CD14-positive monocyte (primary cell): ENCODE measurements at regions of chr1 and their contacts with region 1.

Region 1: GRCh38 chr1:21344750-21345443 is 54.6 kb upstream of the ECE1 start:
- DNase-seq: no peak
- H3K4me3 ChIP-seq: peak overlapping the region; percentile 14 to 75 (median 48)
- H3K4me3 Mint-ChIP-seq: peak overlapping the region; percentile 92 to 94
- H3K27ac ChIP-seq: no peak overlapping the region
- H3K27ac Mint-ChIP-seq: peak overlapping the region in 5 of 7 donors; percentile 45 to 87 (median 50)
- H3K4me1 ChIP-seq: peaks cover 31 to 39% of the 10 kb centered on the region in 2 donors
- H3K4me1 Mint-ChIP-seq: peaks cover 41% of the 10 kb centered on the region
- H3K27me3 ChIP-seq: peaks cover 49 to 89% of the 10 kb centered on the region in 2 donors
- H3K27me3 Mint-ChIP-seq: peaks cover 45 to 65% (median 58%) of the 10 kb centered on the region in 3 donors
- CTCF ChIP-seq: no peak

Region 2: GRCh38 chr1:21255278-21255942 is 89.5 kb before region 1 on chr1:
- intact Hi-C with region 1: loop called in 1 of 2 experiments (anchors 5 kb)
- DNase-seq: peak; percentile 83 to 89 (median 84)
- H3K4me3 ChIP-seq: no peak overlapping the region
- H3K4me3 Mint-ChIP-seq: peak overlapping the region in 1 of 2 donors; percentile 48
- H3K27ac ChIP-seq: no peak overlapping the region
- H3K27ac Mint-ChIP-seq: peak overlapping the region; percentile 36 to 80 (median 66)
- H3K4me1 ChIP-seq: peaks cover 0 to under 1% of the 10 kb centered on the region in 2 donors
- H3K4me1 Mint-ChIP-seq: peaks cover 10% of the 10 kb centered on the region
- H3K27me3 ChIP-seq: peaks cover 0 to 18% of the 10 kb centered on the region in 2 donors
- H3K27me3 Mint-ChIP-seq: peaks cover 19 to 66% (median 42%) of the 10 kb centered on the region in 3 donors
- CTCF ChIP-seq: peak; percentile 85

Region 3: GRCh38 chr1:21308847-21309652 is 35.8 kb before region 1 on chr1:
- intact Hi-C with region 1: loop called in 1 of 2 experiments (anchors 5 kb)
- DNase-seq: no peak
- H3K4me3 ChIP-seq: no peak overlapping the region
- H3K4me3 Mint-ChIP-seq: peak overlapping the region in 1 of 2 donors; percentile 46
- H3K27ac ChIP-seq: no peak overlapping the region
- H3K27ac Mint-ChIP-seq: no peak overlapping the region
- H3K4me1 ChIP-seq: no peaks in the 10 kb centered on the region
- H3K4me1 Mint-ChIP-seq: peaks cover 14% of the 10 kb centered on the region
- H3K27me3 ChIP-seq: peaks cover 0 to 9% of the 10 kb centered on the region in 2 donors
- H3K27me3 Mint-ChIP-seq: peaks cover 24 to 55% (median 37%) of the 10 kb centered on the region in 3 donors
- CTCF ChIP-seq: no peak